Psoas muscle (tissue), 8 donors: ENCODE measurements at regions of chr2 and their contacts with region 1.

Region 1: GRCh38 chr2:177164584-177165052 is 48.0 kb upstream of the HNRNPA3 start:
- DNase-seq: peak; percentile 76 to 88
- ATAC-seq: peak; percentile 82 to 92 (median 86)
- H3K4me3 ChIP-seq: peak overlapping the region; percentile 69
- H3K27ac ChIP-seq: peak overlapping the region; percentile 76
- H3K4me1 ChIP-seq: peaks cover 24% of the 10 kb centered on the region
- H3K27me3 ChIP-seq: no peaks in the 10 kb centered on the region
- CTCF ChIP-seq: peak; percentile 100

Region 2: GRCh38 chr2:176445956-176446355 is 718.7 kb before region 1 on chr2:
- intact Hi-C with region 1: no loop called
- DNase-seq: no peak
- ATAC-seq: no peak
- H3K4me3 ChIP-seq: no peak overlapping the region
- H3K27ac ChIP-seq: no peak overlapping the region
- H3K4me1 ChIP-seq: peaks cover 2% of the 10 kb centered on the region
- H3K27me3 ChIP-seq: no peaks in the 10 kb centered on the region
- CTCF ChIP-seq: no peak

Region 3: DNA sequence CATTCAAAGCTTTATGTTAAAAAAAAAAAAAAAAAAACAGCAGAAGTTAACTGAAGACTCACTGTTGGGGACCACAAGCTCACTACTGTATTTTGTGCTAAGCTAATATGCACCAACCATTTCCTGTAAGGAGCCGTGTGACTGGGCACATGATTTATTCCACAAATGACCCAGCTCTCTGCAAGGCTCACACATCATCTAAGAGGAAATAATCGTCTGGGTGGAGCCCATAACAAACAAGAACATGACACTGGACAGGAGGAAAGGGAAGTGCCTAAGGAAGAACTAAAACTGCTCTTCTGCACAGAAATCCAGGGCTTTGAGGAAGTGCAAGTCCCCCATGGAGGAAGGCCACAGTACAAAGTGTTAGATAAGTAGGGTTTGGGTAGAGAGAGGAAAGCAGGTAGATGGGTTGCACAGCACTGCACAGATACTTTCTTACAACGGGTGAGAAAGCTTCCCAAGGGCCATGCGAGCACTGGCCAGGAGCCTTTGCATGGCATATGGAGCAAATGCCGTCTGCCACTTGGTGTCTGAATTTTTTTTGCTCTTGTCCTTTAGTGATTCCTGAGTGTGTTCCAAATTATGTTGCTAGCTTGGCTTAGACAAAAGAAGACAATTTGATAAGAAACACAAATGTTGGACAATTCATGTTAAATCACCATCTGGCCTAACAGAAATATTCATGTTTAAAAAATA is 75.5 kb after region 1 on chr2:
- intact Hi-C with region 1: no loop called
- DNase-seq: no peak
- ATAC-seq: peak; percentile 9 to 43 (median 26)
- H3K4me3 ChIP-seq: peak overlapping the region; percentile 26
- H3K27ac ChIP-seq: peak overlapping the region; percentile 89
- H3K4me1 ChIP-seq: peaks cover 92% of the 10 kb centered on the region
- H3K27me3 ChIP-seq: no peaks in the 10 kb centered on the region
- CTCF ChIP-seq: no peak

Region 4: GRCh38 chr2:177263451-177264208 is 99.0 kb after region 1 on chr2:
- intact Hi-C with region 1: loop called in 1 of 2 experiments (anchors 10 kb)
- DNase-seq: peak; percentile 99 to 100
- ATAC-seq: peak; percentile 82 to 84 (median 83)
- H3K4me3 ChIP-seq: peak overlapping the region; percentile 86
- H3K27ac ChIP-seq: peak overlapping the region; percentile 99
- H3K4me1 ChIP-seq: peaks cover 44% of the 10 kb centered on the region
- H3K27me3 ChIP-seq: no peaks in the 10 kb centered on the region
- CTCF ChIP-seq: peak; percentile 88

Region 5: DNA sequence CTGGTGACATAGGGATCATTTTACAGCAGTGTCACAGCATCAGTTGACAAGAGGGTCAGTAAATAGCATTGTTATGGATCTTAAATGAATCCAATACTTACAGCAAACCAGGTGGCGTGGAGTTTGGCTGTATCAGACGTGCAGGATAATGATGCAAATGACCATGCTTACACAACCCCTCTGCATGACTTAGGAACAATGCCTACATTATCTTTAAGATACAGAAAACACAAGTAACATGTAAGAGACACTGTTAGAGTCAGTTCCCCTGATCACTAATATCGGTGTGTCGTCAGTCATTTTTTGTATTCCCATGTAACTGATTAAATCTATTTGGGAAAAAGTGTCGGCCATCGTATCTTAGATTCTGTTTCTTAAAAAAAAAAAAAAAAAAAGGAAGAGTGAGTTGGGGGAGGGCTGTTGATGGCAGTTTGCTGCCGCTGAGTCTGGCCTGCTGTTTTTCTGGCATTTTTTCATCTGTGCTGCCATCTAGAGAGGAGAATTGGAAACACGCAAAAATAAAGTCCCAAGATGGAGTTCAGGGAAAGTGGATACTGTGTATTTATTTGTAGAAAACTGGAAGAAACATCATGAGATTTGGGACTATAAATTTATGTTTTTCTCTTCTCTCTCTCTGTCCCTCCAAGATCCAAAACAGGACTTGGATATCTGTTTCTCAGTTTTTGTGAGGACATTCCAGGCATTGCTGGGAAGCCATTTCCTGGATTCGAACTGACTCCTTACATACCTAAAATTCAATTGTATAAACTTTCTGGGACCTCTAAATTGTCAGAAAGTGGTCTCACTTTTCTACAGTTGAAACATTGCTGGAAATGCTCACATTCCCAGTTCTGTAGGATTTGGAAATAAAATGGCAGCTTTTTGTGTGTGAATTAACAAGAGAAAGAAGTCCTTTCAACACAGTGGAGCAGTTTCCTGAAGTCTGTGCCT is 167.7 kb after region 1 on chr2:
- intact Hi-C with region 1: loop called (anchors 1 to 2 kb)
- DNase-seq: peak in 1 of 2 donors; percentile 54
- ATAC-seq: peak; percentile 77 to 91 (median 86)
- H3K4me3 ChIP-seq: peak overlapping the region; percentile 21
- H3K27ac ChIP-seq: peak overlapping the region; percentile 10
- H3K4me1 ChIP-seq: peaks cover 6% of the 10 kb centered on the region
- H3K27me3 ChIP-seq: no peaks in the 10 kb centered on the region
- CTCF ChIP-seq: peak; percentile 67

Region 6: GRCh38 chr2:177419274-177419673 is 254.7 kb after region 1 on chr2:
- intact Hi-C with region 1: loop called (anchors 5 kb)
- DNase-seq: no peak
- ATAC-seq: peak in 2 of 4 donors; percentile 59 to 73
- H3K4me3 ChIP-seq: no peak overlapping the region
- H3K27ac ChIP-seq: no peak overlapping the region
- H3K4me1 ChIP-seq: peaks cover 28% of the 10 kb centered on the region
- H3K27me3 ChIP-seq: no peaks in the 10 kb centered on the region
- CTCF ChIP-seq: no peak

Region 7: GRCh38 chr2:177724398-177725287 is 560.0 kb after region 1 on chr2:
- intact Hi-C with region 1: loop called in 1 of 2 experiments (anchors 10 kb)
- DNase-seq: peak; percentile 28 to 54
- ATAC-seq: peak; percentile 63 to 87 (median 76)
- H3K4me3 ChIP-seq: no peak overlapping the region
- H3K27ac ChIP-seq: no peak overlapping the region
- H3K4me1 ChIP-seq: peaks cover 4% of the 10 kb centered on the region
- H3K27me3 ChIP-seq: no peaks in the 10 kb centered on the region
- CTCF ChIP-seq: peak; percentile 84